GM12878 (cell line): ENCODE measurements at regions of chr14 and their contacts with region 1.

Region 1: GRCh38 chr14:34003691-34004090 is 52.8 kb upstream of the EGLN3 start:
- DNase-seq: no peak
- ATAC-seq: peak; percentile 19; the same call in 2 of the 3 replicates
- H3K4me3 ChIP-seq: no peak overlapping the region
- H3K27ac ChIP-seq: no peak overlapping the region
- H3K4me1 ChIP-seq: peaks cover 6% of the 10 kb centered on the region
- H3K27me3 ChIP-seq: no peaks in the 10 kb centered on the region
- CTCF ChIP-seq: no peak
- EP300 ChIP-seq: no peak
- POLR2A ChIP-seq: no peak
- RAD21 ChIP-seq: no peak

Region 2: DNA sequence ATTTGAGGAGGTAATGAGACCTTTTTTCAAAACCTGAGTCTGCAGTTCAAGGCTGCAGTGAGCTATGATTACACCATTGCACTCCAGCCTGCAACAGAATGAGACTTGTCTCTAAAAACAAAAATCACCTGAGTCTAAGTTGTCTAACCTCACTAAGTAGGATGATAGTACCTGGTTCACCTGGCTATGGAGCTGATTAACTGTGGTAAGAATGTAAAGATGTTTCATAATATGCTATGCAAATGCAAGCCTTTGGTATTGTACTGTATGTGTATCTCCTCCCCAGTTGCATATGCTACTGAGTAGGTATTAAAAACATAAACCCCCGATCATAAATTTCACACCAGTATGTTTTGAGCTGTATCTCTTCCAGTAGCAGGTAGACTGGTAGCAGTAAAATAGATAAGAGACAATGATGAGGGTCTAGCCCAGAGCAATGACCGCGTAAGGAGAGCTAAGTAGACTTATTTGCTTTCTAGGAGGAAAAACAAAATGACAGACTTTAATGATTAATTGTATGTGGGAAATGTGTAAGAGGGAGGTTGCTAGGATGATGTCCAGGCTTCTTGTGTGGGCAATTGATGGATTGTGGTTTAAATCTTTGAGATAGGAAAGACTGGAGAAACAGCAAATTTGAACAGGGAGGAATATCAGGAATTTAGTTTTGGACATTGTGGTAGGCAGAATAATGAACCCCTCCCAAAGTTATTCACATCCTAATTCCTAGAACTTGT is 11.2 kb before region 1 on chr14:
- CTCF ChIA-PET with region 1: interaction called, 9 read pairs
- POLR2A ChIA-PET with region 1: interaction called, 6 read pairs
- RAD21 ChIA-PET with region 1: interaction called, 5 read pairs
- SMC1A ChIA-PET with region 1: interaction called, 39 read pairs
- in situ Hi-C with region 1: no loop called
- intact Hi-C with region 1: no loop called
- DNase-seq: no peak
- ATAC-seq: no peak
- H3K4me3 ChIP-seq: no peak overlapping the region
- H3K27ac ChIP-seq: no peak overlapping the region
- H3K4me1 ChIP-seq: no peaks in the 10 kb centered on the region
- H3K27me3 ChIP-seq: no peaks in the 10 kb centered on the region
- CTCF ChIP-seq: no peak
- EP300 ChIP-seq: no peak
- POLR2A ChIP-seq: no peak
- RAD21 ChIP-seq: no peak